ENCODE measurements at regions of chr10 and their contacts with region 1.

Region 1: GRCh38 chr10:79443338-79444198 is 1.9 kb downstream of the ZCCHC24 start:
- DNase-seq: peak in 1 of 2 donors; percentile 89
- H3K4me3 ChIP-seq: peak overlapping the region; percentile 85 to 86
- H3K27ac ChIP-seq: peak overlapping the region; percentile 96
- H3K4me1 ChIP-seq: peaks cover 70% of the 10 kb centered on the region
- H3K27me3 ChIP-seq: no peaks in the 10 kb centered on the region
- CTCF ChIP-seq: no peak
- POLR2A ChIP-seq: no peak

Region 2: GRCh38 chr10:79381804-79382221 is 61.8 kb before region 1 on chr10:
- intact Hi-C with region 1: loop called (anchors 1 kb)
- DNase-seq: peak; percentile 84 to 93
- H3K4me3 ChIP-seq: no peak overlapping the region
- H3K27ac ChIP-seq: peak overlapping the region; percentile 86
- H3K4me1 ChIP-seq: peaks cover 41% of the 10 kb centered on the region
- H3K27me3 ChIP-seq: no peaks in the 10 kb centered on the region
- CTCF ChIP-seq: no peak
- POLR2A ChIP-seq: no peak

Region 3: DNA sequence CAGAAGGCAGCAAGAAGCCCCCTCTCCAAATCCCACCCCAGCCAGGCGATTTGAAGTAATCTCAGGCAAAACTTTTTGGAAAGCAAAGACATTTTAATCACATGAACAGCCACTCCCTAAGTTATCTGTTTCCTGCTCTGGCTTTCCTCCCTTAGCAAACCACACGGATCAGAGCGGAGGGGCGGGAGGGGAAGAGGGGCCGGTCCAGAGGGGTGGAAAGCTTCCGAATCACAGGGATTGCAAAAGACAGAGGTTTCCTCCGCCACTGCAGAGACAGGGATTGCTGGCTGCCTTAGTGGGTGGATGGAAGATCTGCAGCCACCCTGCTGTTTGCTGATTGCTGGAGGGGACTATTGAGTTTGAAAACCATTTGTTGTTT is 39.3 kb before region 1 on chr10:
- intact Hi-C with region 1: loop called (anchors 2 kb)
- DNase-seq: no peak
- H3K4me3 ChIP-seq: peak overlapping the region in 1 of 2 donors; percentile 7
- H3K27ac ChIP-seq: no peak overlapping the region
- H3K4me1 ChIP-seq: peaks cover 50% of the 10 kb centered on the region
- H3K27me3 ChIP-seq: no peaks in the 10 kb centered on the region
- CTCF ChIP-seq: no peak
- POLR2A ChIP-seq: no peak